ENCODE measurements at regions of chr12 and their contacts with region 1.

Region 1: GRCh38 chr12:76422543-76423438 is 74.6 kb upstream of the BBS10 start:
- DNase-seq: peak; percentile 22 to 35
- H3K4me3 ChIP-seq: peak overlapping the region; percentile 12; the same call in 1 of the 2 replicates
- H3K4me3 Mint-ChIP-seq: peak overlapping the region; percentile 64
- H3K27ac Mint-ChIP-seq: peak overlapping the region; percentile 67
- H3K4me1 ChIP-seq: peaks cover 24% of the 10 kb centered on the region
- H3K4me1 Mint-ChIP-seq: peaks cover 21% of the 10 kb centered on the region
- H3K27me3 ChIP-seq: no peaks in the 10 kb centered on the region
- H3K27me3 Mint-ChIP-seq: no peaks in the 10 kb centered on the region
- CTCF ChIP-seq: no peak

Region 2: DNA sequence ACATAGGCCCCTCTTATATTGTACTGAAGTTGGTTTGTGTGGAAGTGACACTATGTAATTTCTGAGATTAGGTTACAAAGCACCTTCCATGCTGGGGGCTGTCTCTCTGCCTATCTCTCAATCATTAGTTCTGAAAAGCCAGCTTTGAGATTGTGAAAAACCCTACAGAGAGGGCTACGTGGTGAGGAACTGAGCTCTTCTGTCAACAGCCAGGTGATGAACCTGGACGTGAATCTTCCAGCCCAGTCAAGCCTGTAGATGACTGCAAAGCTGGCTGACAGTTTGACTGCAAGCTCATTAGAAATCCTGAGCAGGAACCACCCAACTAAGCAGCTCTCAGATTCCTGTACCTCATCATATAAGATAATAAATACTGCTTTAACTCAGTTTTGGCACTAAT is 38.2 kb before region 1 on chr12:
- CTCF ChIA-PET with region 1: no interaction called
- POLR2A ChIA-PET with region 1: no interaction called
- intact Hi-C with region 1: no loop called
- DNase-seq: no peak
- H3K4me3 ChIP-seq: no peak overlapping the region
- H3K4me3 Mint-ChIP-seq: no peak overlapping the region
- H3K27ac Mint-ChIP-seq: no peak overlapping the region
- H3K4me1 ChIP-seq: no peaks in the 10 kb centered on the region
- H3K4me1 Mint-ChIP-seq: no peaks in the 10 kb centered on the region
- H3K27me3 ChIP-seq: no peaks in the 10 kb centered on the region
- H3K27me3 Mint-ChIP-seq: no peaks in the 10 kb centered on the region
- CTCF ChIP-seq: no peak

Region 3: DNA sequence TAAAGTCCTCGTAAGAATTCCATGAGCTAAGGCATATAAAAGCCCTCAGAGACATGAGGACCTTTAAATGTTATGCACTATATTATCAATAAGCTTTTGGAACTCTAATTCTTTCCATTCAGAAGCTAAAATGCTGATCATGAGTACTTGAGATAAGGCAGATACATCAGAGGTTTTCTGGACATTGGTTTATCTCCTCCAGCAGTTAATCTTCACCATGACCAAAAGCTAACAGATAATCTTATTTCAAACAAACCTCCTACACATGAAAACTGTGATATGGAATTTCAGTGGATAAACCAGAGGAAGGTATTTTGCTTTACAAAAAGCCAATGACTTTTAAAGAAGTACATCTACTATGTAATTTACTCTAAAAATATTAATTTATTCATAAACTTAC is 23.3 kb after region 1 on chr12:
- CTCF ChIA-PET with region 1: interaction called, 3 read pairs
- POLR2A ChIA-PET with region 1: no interaction called
- intact Hi-C with region 1: loop called (anchors 1 kb)
- DNase-seq: peak in 1 of 2 experiments; percentile 13
- H3K4me3 ChIP-seq: no peak overlapping the region
- H3K4me3 Mint-ChIP-seq: no peak overlapping the region
- H3K27ac Mint-ChIP-seq: no peak overlapping the region
- H3K4me1 ChIP-seq: peaks cover 56% of the 10 kb centered on the region
- H3K4me1 Mint-ChIP-seq: peaks cover 8% of the 10 kb centered on the region
- H3K27me3 ChIP-seq: no peaks in the 10 kb centered on the region
- H3K27me3 Mint-ChIP-seq: no peaks in the 10 kb centered on the region
- CTCF ChIP-seq: no peak

Measured in Caco-2 (cell line).